ENCODE measurements at regions of chr19 and their contacts with region 1.

Region 1: GRCh38 chr19:55809381-55810058 is 22.3 kb downstream of the NLRP11 start:
- DNase-seq: peak; percentile 61 to 90 (median 72)
- ATAC-seq: peak; percentile 95 to 99 (median 97)
- H3K4me3 ChIP-seq: no peak overlapping the region
- H3K27ac ChIP-seq: no peak overlapping the region
- H3K4me1 ChIP-seq: no peaks in the 10 kb centered on the region
- H3K27me3 ChIP-seq: no peaks in the 10 kb centered on the region
- CTCF ChIP-seq: peak; percentile 15 to 46 (median 36)

Region 2: GRCh38 chr19:55691561-55692481 is 117.7 kb before region 1 on chr19:
- intact Hi-C with region 1: loop called in 1 of 3 experiments (anchors 10 kb)
- DNase-seq: peak in 2 of 6 donors; percentile 46 to 72
- ATAC-seq: no peak
- H3K4me3 ChIP-seq: no peak overlapping the region
- H3K27ac ChIP-seq: no peak overlapping the region
- H3K4me1 ChIP-seq: no peaks in the 10 kb centered on the region
- H3K27me3 ChIP-seq: no peaks in the 10 kb centered on the region
- CTCF ChIP-seq: no peak

Region 3: GRCh38 chr19:55703790-55704215 is 105.7 kb before region 1 on chr19:
- intact Hi-C with region 1: loop called in 2 of 3 experiments (anchors 5 to 10 kb)
- DNase-seq: peak in 5 of 6 donors; percentile 51 to 89 (median 77)
- ATAC-seq: peak; percentile 82 to 94 (median 89)
- H3K4me3 ChIP-seq: no peak overlapping the region
- H3K27ac ChIP-seq: no peak overlapping the region
- H3K4me1 ChIP-seq: no peaks in the 10 kb centered on the region
- H3K27me3 ChIP-seq: no peaks in the 10 kb centered on the region
- CTCF ChIP-seq: peak; percentile 75 to 93 (median 84)

Region 4: DNA sequence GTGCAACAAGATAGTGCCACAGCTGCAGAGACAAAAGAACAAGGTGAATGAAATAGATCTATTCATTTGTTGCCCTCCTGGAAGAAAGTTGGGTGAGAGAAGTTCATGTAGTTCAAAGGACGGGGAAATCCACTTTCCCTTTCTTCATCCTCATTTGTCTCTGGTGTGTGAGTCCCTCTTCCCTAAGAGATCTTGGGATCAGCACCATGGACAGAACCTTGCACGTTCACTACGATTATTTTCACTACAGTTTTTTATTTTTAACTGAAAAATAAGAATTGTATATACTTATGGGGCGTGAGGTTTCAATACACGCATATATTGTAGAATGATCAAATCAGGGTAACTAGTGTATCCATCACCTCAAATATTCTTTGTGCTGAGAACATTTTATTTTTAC is 206.2 kb after region 1 on chr19:
- intact Hi-C with region 1: no loop called
- DNase-seq: no peak
- ATAC-seq: no peak
- H3K4me3 ChIP-seq: no peak overlapping the region
- H3K27ac ChIP-seq: no peak overlapping the region
- H3K4me1 ChIP-seq: no peaks in the 10 kb centered on the region
- H3K27me3 ChIP-seq: no peaks in the 10 kb centered on the region
- CTCF ChIP-seq: no peak

Region 5: DNA sequence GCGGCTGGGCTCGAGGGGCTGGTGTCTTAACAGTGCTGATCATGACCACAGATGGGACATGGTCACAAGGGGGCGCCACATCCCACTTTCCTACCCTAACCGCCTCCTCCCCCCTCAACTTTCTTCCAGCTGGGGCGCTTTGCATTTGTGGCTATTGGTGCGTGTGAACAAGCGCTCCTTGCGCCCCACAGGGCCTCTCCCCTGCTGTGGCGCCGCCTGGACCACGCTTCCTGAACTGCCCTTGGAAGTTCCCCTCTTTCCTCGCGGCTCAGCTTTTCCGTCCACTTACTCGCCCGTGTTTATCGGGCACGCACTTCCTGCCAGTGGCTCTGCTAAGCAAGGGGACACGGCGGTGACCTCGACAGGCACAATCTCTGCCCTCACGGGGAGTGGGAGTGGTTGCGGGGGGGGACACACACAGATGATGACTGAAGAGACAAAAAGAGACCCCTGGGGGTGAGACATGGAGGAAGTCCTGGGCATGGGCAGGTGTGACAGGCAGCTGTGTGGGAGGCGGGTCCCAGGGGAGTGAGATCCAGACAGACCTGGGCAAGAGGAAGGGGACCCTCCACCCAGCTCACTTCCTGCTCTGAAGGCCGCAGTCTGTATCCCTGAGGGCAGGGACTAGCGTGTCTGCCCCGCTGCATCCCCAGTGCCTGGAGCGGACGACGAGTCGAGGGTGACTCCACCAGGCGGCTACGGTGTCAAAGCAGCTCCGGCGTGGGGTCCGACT is 271.3 kb after region 1 on chr19:
- intact Hi-C with region 1: no loop called
- DNase-seq: peak; percentile 68 to 92 (median 82)
- ATAC-seq: peak; percentile 84 to 94 (median 86)
- H3K4me3 ChIP-seq: peak overlapping the region in 2 of 4 donors; percentile 38 to 44
- H3K27ac ChIP-seq: no peak overlapping the region
- H3K4me1 ChIP-seq: peaks cover 0 to 6% (median 0%) of the 10 kb centered on the region in 3 donors
- H3K27me3 ChIP-seq: no peaks in the 10 kb centered on the region
- CTCF ChIP-seq: peak; percentile 24 to 44 (median 31)

Measured in pancreas (tissue), 10 donors.